Caco-2 (cell line): ENCODE measurements at regions of chr20 and their contacts with region 1.

Region 1: DNA sequence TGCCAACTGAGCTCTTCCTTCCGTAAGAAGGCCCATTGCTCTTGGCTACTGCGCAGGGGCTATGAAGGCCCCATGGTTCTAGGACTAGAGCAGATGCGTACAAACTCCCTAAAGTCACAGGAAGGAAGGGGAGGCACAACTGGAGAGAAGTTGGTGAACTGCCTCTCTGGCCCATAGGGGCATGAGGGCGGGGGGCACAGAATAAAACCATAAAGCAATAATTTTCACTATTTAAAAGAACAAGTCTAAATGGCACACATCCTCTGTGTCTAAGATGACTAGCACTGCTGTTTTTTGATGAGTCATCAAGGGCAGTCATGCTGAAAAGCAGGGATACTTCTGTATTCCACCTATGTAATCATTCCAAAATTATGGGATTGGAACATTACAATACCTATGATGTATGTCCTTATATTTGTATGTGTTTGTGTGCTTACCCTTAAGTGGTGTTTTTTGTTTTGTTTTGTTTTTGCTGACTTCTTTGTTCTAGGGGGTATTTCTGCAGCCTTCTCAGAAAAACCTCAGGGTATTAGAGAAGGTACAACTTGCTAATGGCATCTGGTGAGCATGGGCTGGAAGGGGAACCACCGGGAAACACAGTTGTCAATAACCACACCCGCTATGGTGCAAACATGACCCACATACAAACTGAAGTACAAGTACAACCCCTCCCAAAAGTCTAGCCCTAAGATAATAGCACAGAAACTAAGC is 36.9 kb downstream of the B4GALT5 start:
- DNase-seq: peak in 1 of 2 experiments; percentile 33
- H3K4me3 ChIP-seq: no peak overlapping the region
- H3K4me3 Mint-ChIP-seq: peak overlapping the region; percentile 72
- H3K27ac Mint-ChIP-seq: peak overlapping the region; percentile 98
- H3K4me1 ChIP-seq: peaks cover 92% of the 10 kb centered on the region
- H3K4me1 Mint-ChIP-seq: peaks cover 77% of the 10 kb centered on the region
- H3K27me3 ChIP-seq: no peaks in the 10 kb centered on the region
- H3K27me3 Mint-ChIP-seq: no peaks in the 10 kb centered on the region
- CTCF ChIP-seq: no peak

Region 2: DNA sequence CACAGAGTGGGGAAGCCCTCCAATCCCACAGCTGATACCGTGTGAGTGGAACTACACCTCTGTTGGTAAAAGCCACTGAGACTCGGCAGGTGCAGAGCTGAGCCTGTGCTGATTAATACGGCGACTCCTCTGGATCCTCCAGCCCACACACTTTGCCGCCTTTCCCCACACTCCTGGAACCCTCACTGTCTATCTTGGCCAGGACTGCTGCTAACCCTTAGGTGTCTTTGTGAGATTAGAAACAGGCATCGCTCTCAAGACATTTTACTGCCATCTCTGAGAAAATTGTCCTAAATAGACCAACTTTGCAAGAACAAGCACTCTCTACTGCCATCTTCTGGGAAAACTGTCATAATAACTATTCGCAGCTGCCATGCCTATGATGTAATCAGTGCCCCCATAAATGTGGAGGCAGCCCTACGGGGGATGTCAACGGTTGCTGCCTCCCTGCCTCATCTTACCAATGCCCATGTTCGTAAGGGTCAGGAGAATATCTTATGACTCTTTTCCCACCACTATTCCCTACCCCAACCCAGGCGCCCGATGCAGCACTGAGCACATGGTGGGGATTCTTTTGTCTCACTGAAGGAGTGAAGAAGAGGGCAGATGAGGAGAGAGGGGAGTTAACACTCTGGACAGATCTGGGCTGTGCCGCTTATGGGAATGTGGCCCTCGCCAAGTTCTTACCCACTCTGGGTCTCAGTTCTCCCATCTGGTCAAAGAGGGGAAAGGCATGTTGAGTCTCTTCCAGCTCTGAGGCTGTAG is 168.1 kb before region 1 on chr20:
- CTCF ChIA-PET with region 1: no interaction called
- POLR2A ChIA-PET with region 1: no interaction called
- intact Hi-C with region 1: no loop called
- DNase-seq: peak; percentile 46 to 73
- H3K4me3 ChIP-seq: no peak overlapping the region
- H3K4me3 Mint-ChIP-seq: no peak overlapping the region
- H3K27ac Mint-ChIP-seq: no peak overlapping the region
- H3K4me1 ChIP-seq: peaks cover 8% of the 10 kb centered on the region
- H3K4me1 Mint-ChIP-seq: no peaks in the 10 kb centered on the region
- H3K27me3 ChIP-seq: no peaks in the 10 kb centered on the region; the same call in 1 of the 2 replicates
- H3K27me3 Mint-ChIP-seq: peaks cover 7% of the 10 kb centered on the region
- CTCF ChIP-seq: peak; percentile 77 to 98

Region 3: DNA sequence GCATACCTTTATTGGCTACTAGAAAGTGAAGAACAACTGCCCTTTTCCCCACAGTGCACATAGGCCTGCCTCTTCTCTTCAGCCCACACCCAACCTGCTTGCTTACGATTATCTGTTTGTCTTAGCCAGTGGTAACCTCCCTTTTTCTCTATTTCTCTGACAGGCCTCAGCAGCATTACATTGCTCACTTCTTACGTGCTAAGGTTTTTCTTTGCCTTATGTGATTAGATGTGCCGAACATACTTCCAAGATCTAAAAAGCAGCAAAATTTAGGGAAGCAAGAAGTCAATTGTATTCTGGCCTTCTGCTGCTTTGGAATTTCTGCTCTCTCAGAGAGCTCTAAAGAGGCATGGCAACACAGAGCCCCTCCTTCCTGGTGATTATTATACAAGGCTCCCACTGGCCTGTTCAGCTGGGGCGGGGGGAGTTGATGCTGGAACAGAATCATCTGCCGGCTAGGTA is 29.9 kb after region 1 on chr20:
- CTCF ChIA-PET with region 1: interaction called, 8 read pairs
- POLR2A ChIA-PET with region 1: no interaction called
- intact Hi-C with region 1: loop called (anchors 2 kb)
- DNase-seq: no peak
- H3K4me3 ChIP-seq: no peak overlapping the region
- H3K4me3 Mint-ChIP-seq: peak overlapping the region; percentile 5
- H3K27ac Mint-ChIP-seq: peak overlapping the region; percentile 42
- H3K4me1 ChIP-seq: peaks cover 19% of the 10 kb centered on the region
- H3K4me1 Mint-ChIP-seq: peaks cover 18% of the 10 kb centered on the region
- H3K27me3 ChIP-seq: no peaks in the 10 kb centered on the region
- H3K27me3 Mint-ChIP-seq: no peaks in the 10 kb centered on the region
- CTCF ChIP-seq: no peak

Region 4: GRCh38 chr20:49768204-49769047 is 91.7 kb after region 1 on chr20:
- CTCF ChIA-PET with region 1: no interaction called
- POLR2A ChIA-PET with region 1: no interaction called
- intact Hi-C with region 1: loop called (anchors 1 kb)
- DNase-seq: peak; percentile 95 to 96
- H3K4me3 ChIP-seq: no peak overlapping the region
- H3K4me3 Mint-ChIP-seq: peak overlapping the region; percentile 57
- H3K27ac Mint-ChIP-seq: peak overlapping the region; percentile 93
- H3K4me1 ChIP-seq: peaks cover 57% of the 10 kb centered on the region
- H3K4me1 Mint-ChIP-seq: peaks cover 33% of the 10 kb centered on the region
- H3K27me3 ChIP-seq: no peaks in the 10 kb centered on the region
- H3K27me3 Mint-ChIP-seq: no peaks in the 10 kb centered on the region
- CTCF ChIP-seq: no peak

Region 5: DNA sequence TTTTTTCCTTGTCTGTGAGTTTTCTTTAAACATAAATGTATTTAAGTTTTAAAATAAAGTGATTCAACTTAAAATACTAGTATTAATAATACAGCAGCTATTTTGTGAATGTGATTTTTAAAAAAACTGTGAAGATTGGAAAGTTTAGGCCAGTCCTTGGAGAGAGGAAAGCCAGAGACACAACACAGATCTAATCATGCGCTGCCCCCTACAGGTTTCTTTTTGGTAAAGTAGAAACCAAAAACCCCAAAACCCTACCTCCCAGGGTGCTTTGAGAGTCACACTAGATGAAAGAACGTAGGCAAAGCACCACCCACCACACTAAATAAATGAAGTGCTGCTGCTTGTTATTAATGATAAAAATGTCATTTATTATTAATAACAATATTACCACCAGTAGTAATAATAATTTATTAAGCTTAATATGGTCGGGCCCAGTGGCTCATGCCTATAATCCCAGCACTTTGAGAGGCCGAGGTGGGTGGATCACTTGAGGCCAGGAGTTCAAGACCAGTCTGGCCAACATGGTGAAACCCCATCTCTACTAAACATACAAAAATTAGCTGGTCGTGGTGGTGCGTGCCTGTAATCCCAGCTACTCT is 169.6 kb after region 1 on chr20:
- CTCF ChIA-PET with region 1: interaction called, 5 read pairs
- POLR2A ChIA-PET with region 1: no interaction called
- intact Hi-C with region 1: loop called (anchors 1 kb)
- DNase-seq: peak; percentile 71 to 87
- H3K4me3 ChIP-seq: no peak overlapping the region
- H3K4me3 Mint-ChIP-seq: no peak overlapping the region
- H3K27ac Mint-ChIP-seq: no peak overlapping the region
- H3K4me1 ChIP-seq: no peaks in the 10 kb centered on the region
- H3K4me1 Mint-ChIP-seq: no peaks in the 10 kb centered on the region
- H3K27me3 ChIP-seq: no peaks in the 10 kb centered on the region
- H3K27me3 Mint-ChIP-seq: no peaks in the 10 kb centered on the region
- CTCF ChIP-seq: peak; percentile 87 to 92